Tibial artery (tissue), 4 donors: ENCODE measurements at regions of chr1 and their contacts with region 1.

Region 1: DNA sequence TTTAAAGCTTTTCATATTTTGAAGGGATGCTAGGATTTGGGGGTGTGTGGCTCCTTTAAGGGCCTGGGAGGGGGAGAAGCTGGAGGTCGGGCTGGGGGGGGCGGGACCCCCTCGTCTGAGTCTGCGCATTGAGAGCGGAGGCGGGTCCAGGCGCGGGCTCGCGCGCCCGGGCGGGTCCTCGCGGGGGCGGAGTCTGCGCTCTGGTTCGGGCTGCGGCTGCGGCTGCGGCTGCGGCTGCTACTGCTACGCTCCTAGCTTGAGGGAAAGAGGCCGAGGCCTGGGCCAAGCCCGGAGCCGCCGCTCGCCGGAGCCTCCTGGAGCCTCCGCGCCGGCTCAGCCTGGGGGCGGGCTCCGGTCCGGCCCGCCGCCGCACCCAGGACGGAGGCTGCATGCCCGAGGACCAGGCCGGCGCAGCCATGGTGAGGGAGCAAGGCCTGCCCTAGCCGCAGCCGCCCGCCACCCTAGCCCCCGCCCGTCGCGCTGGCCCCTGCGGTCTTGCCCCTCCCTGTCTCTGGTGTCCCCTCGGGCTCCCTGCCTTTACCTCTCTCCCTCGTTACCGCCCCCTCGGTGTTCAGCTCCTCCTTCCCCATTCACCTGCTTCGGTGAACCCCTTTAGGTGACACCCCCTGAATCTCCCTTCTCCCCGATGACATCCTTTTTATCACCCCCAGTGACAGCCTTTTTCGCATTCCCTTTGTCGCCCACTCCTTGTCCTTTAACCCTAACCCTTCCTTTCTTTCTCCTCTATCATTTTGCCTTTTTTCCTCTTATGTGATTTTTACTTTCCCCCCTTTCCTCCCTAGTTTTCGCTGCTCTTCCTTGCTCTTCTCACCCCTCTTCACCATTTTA is at the start of gene ZYG11B:
- DNase-seq: peak; percentile 84 to 94
- H3K4me3 ChIP-seq: peak within 1 kb of the TSS; percentile 61 to 88
- H3K27ac ChIP-seq: peak within 1 kb of the TSS; percentile 76 to 87
- H3K4me1 ChIP-seq: peaks cover 0 to 26% (median 16%) of the 10 kb centered on the region in 4 donors
- H3K27me3 ChIP-seq: no peaks in the 10 kb centered on the region
- CTCF ChIP-seq: no peak

Region 2: DNA sequence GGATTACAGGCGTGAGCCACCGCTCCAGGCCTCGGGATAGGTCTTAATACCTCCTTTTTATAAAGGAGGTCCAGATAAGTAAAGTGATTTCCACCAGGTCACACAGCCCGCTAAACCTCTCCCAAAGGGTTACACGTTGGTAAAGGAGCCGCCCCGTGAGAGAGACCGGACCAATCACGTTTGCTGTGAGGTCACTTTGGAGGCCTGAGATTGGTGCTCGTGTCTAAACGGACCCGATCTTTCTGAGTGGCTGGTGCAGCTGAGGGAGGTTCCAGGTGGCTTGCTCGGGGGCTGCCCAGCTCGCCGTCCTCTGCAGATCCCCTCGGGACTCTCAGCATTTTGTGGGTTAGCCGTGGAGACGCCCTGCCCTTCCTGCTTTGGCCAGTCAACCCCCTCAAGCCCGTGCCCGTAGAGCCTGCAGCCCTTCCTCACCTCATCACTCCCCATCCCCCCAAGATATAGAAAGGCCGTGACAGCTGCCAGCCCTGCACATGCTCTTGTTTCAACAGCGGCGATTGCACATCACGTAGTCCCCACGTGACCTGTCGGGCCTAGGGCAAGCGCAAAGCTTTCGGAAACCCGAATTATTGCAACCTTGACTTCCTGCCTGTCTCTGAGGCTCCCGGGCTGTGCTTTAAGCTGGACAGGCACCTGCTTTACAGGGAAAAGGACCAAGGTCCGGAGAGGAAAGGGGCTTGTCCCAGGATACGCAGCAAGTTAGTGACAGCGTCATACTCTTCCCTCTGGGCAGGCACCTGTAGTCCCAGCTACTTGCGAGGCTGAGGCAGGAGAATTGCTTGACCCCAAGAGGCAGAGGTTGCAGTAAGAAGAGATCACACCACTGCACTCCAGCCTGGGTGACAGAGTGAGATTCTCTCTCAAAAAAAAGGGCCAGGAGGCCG is 23.4 kb before region 1 on chr1:
- intact Hi-C with region 1: loop called (anchors 2 kb)
- DNase-seq: peak; percentile 88 to 94
- H3K4me3 ChIP-seq: peak overlapping the region; percentile 55 to 63
- H3K27ac ChIP-seq: peak overlapping the region; percentile 64 to 79
- H3K4me1 ChIP-seq: peaks cover 0 to 12% (median 6%) of the 10 kb centered on the region in 4 donors
- H3K27me3 ChIP-seq: no peaks in the 10 kb centered on the region
- CTCF ChIP-seq: no peak

Region 3: DNA sequence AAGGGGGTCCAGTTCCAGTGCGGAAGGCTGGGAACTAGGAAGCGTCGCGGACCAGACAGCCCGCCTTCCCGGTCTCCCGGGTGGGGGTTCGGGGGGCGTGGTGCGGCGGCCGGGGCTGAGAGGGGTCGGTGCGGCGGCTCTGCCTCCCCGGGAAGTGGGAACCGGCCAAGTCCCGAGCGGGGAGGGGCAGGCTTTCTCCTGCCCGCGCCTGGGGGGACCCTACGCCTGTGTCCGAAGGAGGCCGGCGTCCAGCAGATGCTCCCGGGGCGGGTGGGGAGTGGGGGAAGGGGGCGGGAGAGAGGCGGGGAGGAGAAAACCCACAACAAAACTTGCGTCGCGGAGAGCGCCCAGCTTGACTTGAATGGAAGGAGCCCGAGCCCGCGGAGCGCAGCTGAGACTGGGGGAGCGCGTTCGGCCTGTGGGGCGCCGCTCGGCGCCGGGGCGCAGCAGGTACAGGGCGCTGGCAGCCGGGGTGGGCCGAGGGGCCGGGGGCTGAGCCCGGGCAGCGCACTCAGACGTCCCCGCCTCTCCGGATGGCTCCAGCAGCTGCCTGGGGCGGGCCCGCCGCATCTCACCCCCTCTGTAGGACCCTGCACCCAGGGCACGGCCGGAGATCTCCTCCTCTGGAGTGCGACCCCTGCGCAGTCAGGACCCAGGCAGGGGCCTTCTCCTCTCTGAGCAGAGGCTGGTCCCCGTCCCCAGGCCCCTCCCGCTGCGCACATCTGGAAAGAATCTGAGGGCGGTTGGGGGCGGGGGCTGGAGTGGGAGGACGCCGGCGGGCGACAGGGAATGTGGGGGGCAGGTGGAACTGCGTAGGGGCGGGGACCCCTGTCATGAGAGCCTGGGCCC is 335.6 kb after region 1 on chr1 and contains the start of gene PODN:
- intact Hi-C with region 1: no loop called
- DNase-seq: peak; percentile 67 to 77
- H3K4me3 ChIP-seq: peak within 1 kb of the TSS; percentile 64 to 70
- H3K27ac ChIP-seq: peak within 1 kb of the TSS; percentile 68 to 72
- H3K4me1 ChIP-seq: peaks cover 0 to 25% (median 22%) of the 10 kb centered on the region in 4 donors
- H3K27me3 ChIP-seq: peaks cover 0 to 8% of the 10 kb centered on the region in 2 donors
- CTCF ChIP-seq: no peak

Region 4: GRCh38 chr1:53182111-53182593 is 455.7 kb after region 1 on chr1:
- intact Hi-C with region 1: loop called (anchors 10 kb)
- DNase-seq: peak; percentile 85 to 87
- H3K4me3 ChIP-seq: no peak overlapping the region
- H3K27ac ChIP-seq: no peak overlapping the region
- H3K4me1 ChIP-seq: peaks cover 0 to 12% (median 4%) of the 10 kb centered on the region in 4 donors
- H3K27me3 ChIP-seq: no peaks in the 10 kb centered on the region
- CTCF ChIP-seq: peak; percentile 79 to 85